ENCODE measurements at regions of chr10 and their contacts with region 1.

Region 1: DNA sequence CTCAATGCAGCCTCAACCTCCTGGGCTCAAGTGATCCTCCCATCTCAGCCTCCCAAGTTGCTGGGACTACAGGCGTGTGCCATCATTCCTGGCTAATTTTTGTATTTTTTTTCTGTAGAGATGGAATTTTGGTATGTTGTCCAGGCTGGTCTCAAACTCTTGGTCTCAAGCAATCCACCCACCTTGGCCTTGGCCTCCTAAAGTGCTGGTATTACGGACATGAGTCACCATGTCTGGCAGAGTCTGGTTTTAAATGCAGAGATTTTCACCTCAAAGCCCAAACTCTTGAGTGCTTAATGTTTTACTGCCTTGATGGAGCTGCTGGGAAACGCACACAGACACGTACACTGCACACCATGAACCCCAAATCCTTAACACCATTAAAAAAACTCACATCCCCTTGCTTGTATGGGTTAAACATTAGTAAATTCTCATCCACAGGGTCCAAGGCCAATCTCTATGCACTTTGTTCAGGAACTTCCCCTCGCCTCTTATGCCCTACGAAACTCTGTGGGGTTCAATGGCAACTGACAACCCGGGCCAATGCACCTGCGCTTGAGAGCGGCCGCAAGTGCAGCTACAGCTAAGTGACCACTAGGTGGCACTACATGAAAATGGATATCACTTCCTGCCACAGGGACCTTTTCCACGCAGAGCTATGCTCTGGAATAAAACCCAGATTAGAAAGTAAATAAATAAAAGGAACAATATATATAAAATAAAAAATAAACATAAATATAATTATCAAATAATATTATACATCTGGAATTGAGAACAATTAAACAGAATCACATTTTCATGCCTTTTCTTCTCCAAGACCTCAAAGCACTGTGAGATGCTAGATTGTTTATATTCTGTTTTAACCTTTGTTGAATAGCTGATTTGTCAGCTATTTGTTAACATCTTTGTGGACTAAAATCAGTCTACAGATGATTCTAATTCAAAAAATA is 66.9 kb upstream of the AFAP1L2 start:
- DNase-seq: peak; percentile 22
- ATAC-seq: peak; percentile 93
- H3K4me3 Mint-ChIP-seq: no peak overlapping the region
- H3K27ac Mint-ChIP-seq: peak overlapping the region; percentile 53
- H3K4me1 Mint-ChIP-seq: peaks cover 17% of the 10 kb centered on the region
- H3K27me3 Mint-ChIP-seq: no peaks in the 10 kb centered on the region
- CTCF ChIP-seq: peak; percentile 51

Region 2: DNA sequence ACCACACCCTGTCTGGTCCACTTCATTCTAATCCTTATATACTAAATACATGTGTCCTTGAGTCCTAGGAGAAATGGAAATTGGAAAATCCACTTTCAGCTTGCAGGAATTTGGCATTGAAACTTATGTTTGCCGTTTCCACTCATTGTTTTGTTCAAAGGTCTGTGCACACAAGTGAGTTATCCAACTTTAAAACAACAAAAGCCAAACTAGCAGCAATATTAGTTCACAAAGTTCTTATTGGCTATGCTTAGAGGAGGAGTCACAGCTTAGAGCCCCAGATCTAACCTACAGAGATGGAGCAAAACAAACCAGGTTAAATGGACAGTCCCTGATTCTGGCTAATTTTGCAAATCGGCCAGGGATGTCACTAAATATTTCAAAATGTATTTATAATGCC is 22.3 kb before region 1 on chr10:
- CTCF ChIA-PET with region 1: no interaction called
- POLR2A ChIA-PET with region 1: no interaction called
- intact Hi-C with region 1: no loop called
- DNase-seq: no peak
- ATAC-seq: no peak
- H3K4me3 Mint-ChIP-seq: no peak overlapping the region
- H3K27ac Mint-ChIP-seq: no peak overlapping the region
- H3K4me1 Mint-ChIP-seq: no peaks in the 10 kb centered on the region
- H3K27me3 Mint-ChIP-seq: no peaks in the 10 kb centered on the region
- CTCF ChIP-seq: no peak

Region 3: DNA sequence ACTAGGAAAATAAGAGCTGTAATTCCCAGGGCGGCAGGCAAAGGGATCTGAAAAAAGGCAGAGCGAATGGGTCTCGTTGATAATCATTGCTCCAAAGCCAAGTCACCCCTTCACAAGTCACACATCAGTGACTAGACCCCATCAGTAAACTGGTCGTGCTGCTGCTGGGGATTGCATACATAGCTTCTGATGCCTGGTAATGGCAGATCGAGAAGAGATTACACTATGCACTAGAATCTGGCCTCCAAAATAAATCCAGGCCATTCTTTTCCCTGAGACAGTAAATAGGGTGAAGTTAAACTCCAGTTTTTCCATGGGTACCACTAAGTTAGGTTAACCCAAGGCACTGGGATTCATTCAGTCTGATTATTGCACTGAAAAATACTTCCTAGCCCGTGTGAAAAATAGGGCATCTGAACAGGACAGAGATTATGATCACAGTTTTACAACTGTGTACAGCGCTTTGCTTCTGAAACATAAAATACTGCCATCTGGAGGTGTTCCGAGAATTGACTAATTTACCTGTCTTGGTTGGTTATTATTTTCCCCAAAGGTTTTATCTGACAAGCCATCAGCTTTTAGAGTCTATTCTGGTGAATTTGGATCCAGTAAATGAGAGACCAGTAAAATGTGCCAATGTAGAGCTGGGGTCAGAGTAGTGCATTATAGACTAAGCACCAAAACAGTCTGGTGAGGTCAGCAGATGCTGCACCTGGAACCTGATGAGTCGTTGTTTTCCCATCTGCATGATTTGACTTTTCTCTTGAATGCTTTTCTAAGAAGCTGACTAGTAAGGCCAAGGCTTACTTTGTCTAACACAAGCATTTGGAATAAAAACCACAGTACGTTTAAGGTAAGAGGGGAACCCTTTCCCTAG is 15.9 kb after region 1 on chr10:
- CTCF ChIA-PET with region 1: interaction called, 16 read pairs
- POLR2A ChIA-PET with region 1: no interaction called
- intact Hi-C with region 1: no loop called
- DNase-seq: no peak
- ATAC-seq: no peak
- H3K4me3 Mint-ChIP-seq: no peak overlapping the region
- H3K27ac Mint-ChIP-seq: peak overlapping the region; percentile 2
- H3K4me1 Mint-ChIP-seq: peaks cover 7% of the 10 kb centered on the region
- H3K27me3 Mint-ChIP-seq: no peaks in the 10 kb centered on the region
- CTCF ChIP-seq: no peak

Region 4: GRCh38 chr10:114520453-114520852 is 49.2 kb after region 1 on chr10:
- CTCF ChIA-PET with region 1: interaction called, 24 read pairs
- POLR2A ChIA-PET with region 1: interaction called, 6 read pairs
- intact Hi-C with region 1: no loop called
- DNase-seq: no peak
- ATAC-seq: no peak
- H3K4me3 Mint-ChIP-seq: no peak overlapping the region
- H3K27ac Mint-ChIP-seq: peak overlapping the region; percentile 50
- H3K4me1 Mint-ChIP-seq: peaks cover 95% of the 10 kb centered on the region
- H3K27me3 Mint-ChIP-seq: no peaks in the 10 kb centered on the region
- CTCF ChIP-seq: no peak

Region 5: DNA sequence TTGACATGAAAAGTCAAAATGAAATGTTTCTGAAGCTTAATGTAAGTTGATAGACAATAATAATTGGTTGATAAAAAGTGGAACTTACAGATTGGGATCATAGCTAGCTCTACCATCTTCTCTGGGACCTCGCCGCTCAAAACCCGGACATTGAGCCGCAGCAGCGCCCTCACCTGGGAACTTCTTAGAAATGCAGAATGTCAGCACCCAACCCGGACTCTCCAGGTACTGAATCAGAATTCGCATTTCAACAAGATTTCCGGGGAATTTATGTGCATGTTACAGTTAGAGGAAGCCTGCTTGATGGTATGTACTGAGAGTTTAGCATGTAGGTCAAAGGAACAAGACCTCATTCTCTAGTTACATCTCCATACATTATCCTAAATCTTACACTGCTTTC is 223.5 kb after region 1 on chr10:
- CTCF ChIA-PET with region 1: interaction called, 25 read pairs
- POLR2A ChIA-PET with region 1: no interaction called
- intact Hi-C with region 1: loop called (anchors 1 kb)
- DNase-seq: no peak
- ATAC-seq: no peak
- H3K4me3 Mint-ChIP-seq: no peak overlapping the region
- H3K27ac Mint-ChIP-seq: no peak overlapping the region
- H3K4me1 Mint-ChIP-seq: no peaks in the 10 kb centered on the region
- H3K27me3 Mint-ChIP-seq: peaks cover 4% of the 10 kb centered on the region
- CTCF ChIP-seq: no peak

Region 6: GRCh38 chr10:114821293-114821914 is 350.2 kb after region 1 on chr10 and contains the start of gene FHIP2A:
- CTCF ChIA-PET with region 1: interaction called, 7 read pairs
- POLR2A ChIA-PET with region 1: interaction called, 3 read pairs
- intact Hi-C with region 1: loop called (anchors 1 kb)
- DNase-seq: peak; percentile 95
- ATAC-seq: peak; percentile 93
- H3K4me3 Mint-ChIP-seq: peak within 1 kb of the TSS; percentile 91
- H3K27ac Mint-ChIP-seq: peak within 1 kb of the TSS; percentile 90
- H3K4me1 Mint-ChIP-seq: peaks cover 27% of the 10 kb centered on the region
- H3K27me3 Mint-ChIP-seq: no peaks in the 10 kb centered on the region
- CTCF ChIP-seq: no peak
- total RNA-seq, gene FHIP2A: 16.5 and 20.2 TPM in 2 replicates